Activated naive CD4-positive, alpha-beta T cell treated with anti-CD3 and anti-CD28 coated beads, Interleukin-2, amount 10 ng/mL, durations not matched to agents 7 days and 5 days (primary cell): ENCODE measurements at regions of chr1 and their contacts with region 1.

Region 1: DNA sequence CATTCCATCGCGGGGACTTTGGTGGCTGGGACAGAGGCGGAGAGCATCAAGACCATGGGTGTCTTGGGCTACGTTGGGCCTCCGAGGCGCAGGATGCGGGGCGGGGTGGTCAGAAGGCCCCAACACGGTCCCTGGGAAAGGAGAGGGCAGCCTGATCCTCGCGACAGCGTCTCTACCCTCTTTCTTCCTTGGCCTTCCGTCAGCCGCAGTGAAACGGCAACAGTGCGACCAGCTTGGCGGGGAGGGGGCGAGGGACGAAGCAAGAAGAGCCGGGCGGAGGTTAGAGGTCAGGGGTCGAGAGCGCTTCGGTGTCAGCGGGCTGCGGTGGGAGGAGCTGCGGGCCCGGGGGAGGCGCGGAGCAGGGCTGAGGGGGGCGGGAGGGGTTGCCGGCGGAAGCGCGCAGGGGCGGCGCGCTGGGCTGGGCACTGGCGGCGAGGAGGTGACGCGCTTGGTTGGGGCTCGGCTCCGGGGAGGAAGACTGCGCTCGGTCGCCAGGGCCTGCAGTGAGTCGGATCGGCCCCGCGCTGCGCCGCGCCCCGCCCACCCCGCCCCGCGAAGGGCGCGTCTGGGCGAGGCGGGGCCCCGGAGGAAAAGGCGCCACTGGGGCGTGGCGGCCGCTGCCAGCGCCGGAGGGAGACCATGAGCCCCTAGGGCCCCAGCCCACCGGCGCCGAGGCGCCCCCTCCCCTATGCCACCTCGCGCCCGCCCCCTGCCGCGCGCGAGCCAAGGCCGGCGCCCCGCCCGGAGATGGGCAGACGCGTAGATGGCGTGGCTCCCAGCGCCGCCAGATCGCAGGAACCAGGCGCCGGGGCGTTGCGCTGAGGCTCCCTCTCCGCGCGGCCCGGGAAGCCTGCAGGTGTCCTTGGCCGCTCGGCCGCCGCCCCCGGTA is at the start of gene KCNC4:
- DNase-seq: peak; percentile 95
- H3K4me3 Mint-ChIP-seq: peak within 1 kb of the TSS; percentile 86
- H3K27ac Mint-ChIP-seq: peak within 1 kb of the TSS; percentile 95
- H3K4me1 Mint-ChIP-seq: peaks cover 42% of the 10 kb centered on the region
- H3K27me3 Mint-ChIP-seq: peaks cover 31% of the 10 kb centered on the region

Region 2: GRCh38 chr1:109802901-109803561 is 406.9 kb before region 1 on chr1:
- CTCF ChIA-PET with region 1: no interaction called
- DNase-seq: no peak
- H3K4me3 Mint-ChIP-seq: peak overlapping the region; percentile 40
- H3K27ac Mint-ChIP-seq: peak overlapping the region; percentile 98
- H3K4me1 Mint-ChIP-seq: peaks cover 88% of the 10 kb centered on the region
- H3K27me3 Mint-ChIP-seq: no peaks in the 10 kb centered on the region

Region 3: DNA sequence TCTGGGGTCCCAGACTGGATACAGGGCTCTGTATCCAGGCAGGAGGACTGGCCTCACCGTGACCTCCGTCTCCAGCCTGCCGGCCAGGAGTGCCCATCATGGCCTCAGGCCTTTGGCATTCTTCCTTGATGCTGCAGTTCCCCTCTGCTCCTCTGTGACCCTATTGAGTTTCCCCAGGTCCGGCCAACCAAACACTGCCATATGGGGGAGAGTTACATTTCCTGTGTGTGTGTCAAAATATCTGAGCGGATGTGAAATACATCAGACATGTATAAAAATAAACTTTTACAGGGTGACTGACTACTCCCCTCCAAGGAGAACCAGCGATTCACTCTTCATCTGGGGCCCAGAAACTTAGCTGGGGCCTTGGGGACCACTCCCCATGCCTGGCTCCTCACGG is 107.9 kb before region 1 on chr1:
- CTCF ChIA-PET with region 1: no interaction called
- DNase-seq: no peak
- H3K4me3 Mint-ChIP-seq: no peak overlapping the region
- H3K27ac Mint-ChIP-seq: no peak overlapping the region
- H3K4me1 Mint-ChIP-seq: no peaks in the 10 kb centered on the region
- H3K27me3 Mint-ChIP-seq: peaks cover 46% of the 10 kb centered on the region

Region 4: GRCh38 chr1:110196917-110197765 is 12.8 kb before region 1 on chr1:
- CTCF ChIA-PET with region 1: interaction called, 19 read pairs
- DNase-seq: peak; percentile 66
- H3K4me3 Mint-ChIP-seq: no peak overlapping the region
- H3K27ac Mint-ChIP-seq: no peak overlapping the region
- H3K4me1 Mint-ChIP-seq: no peaks in the 10 kb centered on the region
- H3K27me3 Mint-ChIP-seq: no peaks in the 10 kb centered on the region

Region 5: DNA sequence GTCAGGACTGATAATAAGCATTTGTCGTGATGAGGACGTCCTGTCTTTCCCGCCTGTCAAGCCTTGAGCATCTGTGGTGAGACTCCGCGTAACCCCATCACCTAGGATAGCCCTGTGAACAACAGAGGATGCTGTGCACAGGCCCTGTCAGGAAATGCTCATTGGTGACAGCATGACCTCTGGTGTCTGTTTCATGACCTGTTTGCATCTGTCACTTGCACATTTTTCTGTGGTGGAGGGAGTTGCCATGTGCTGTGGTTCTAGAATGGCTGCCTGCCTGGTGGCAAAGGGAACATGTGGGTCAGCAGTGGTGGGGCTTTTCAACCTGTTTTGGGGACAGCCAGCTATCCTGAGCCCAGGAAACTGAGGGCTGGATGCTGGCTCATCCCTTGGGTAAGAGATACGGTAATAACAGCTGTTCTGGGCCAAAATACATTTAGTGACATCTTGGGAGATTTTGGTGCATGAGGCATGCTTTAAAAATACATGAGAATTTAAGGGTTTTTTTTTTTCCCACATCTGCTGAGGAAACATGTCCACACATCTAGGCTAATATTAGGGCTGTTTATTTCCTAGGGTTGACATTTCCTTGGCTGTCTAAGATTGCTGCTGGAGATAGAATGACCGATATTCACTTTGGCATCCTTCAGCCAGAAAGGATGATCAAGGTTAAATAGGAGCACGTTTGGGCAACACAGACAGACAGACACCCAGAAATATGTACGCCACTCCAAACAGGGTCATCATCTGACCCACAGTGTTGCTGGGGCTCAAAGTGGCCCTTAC is 53.1 kb after region 1 on chr1:
- CTCF ChIA-PET with region 1: interaction called, 26 read pairs
- DNase-seq: peak; percentile 30
- H3K4me3 Mint-ChIP-seq: no peak overlapping the region
- H3K27ac Mint-ChIP-seq: no peak overlapping the region
- H3K4me1 Mint-ChIP-seq: no peaks in the 10 kb centered on the region
- H3K27me3 Mint-ChIP-seq: peaks cover 23% of the 10 kb centered on the region

Region 6: GRCh38 chr1:110338886-110339406 is 129.0 kb after region 1 on chr1 and contains the start of gene RBM15:
- CTCF ChIA-PET with region 1: interaction called, 49 read pairs
- DNase-seq: peak; percentile 98
- H3K4me3 Mint-ChIP-seq: no peak within 1 kb of the TSS
- H3K27ac Mint-ChIP-seq: no peak within 1 kb of the TSS
- H3K4me1 Mint-ChIP-seq: peaks cover 60% of the 10 kb centered on the region
- H3K27me3 Mint-ChIP-seq: no peaks in the 10 kb centered on the region

Region 7: GRCh38 chr1:110412576-110412975 is 202.6 kb after region 1 on chr1:
- CTCF ChIA-PET with region 1: interaction called, 14 read pairs
- DNase-seq: peak; percentile 75
- H3K4me3 Mint-ChIP-seq: no peak overlapping the region
- H3K27ac Mint-ChIP-seq: no peak overlapping the region
- H3K4me1 Mint-ChIP-seq: peaks cover 17% of the 10 kb centered on the region
- H3K27me3 Mint-ChIP-seq: no peaks in the 10 kb centered on the region

Region 8: GRCh38 chr1:110460253-110461220 is 250.6 kb after region 1 on chr1:
- CTCF ChIA-PET with region 1: interaction called, 96 read pairs
- DNase-seq: peak; percentile 89
- H3K4me3 Mint-ChIP-seq: no peak overlapping the region
- H3K27ac Mint-ChIP-seq: no peak overlapping the region
- H3K4me1 Mint-ChIP-seq: no peaks in the 10 kb centered on the region
- H3K27me3 Mint-ChIP-seq: peaks cover 11% of the 10 kb centered on the region

Region 9: GRCh38 chr1:110645821-110646735 is 436.1 kb after region 1 on chr1:
- CTCF ChIA-PET with region 1: no interaction called
- DNase-seq: no peak
- H3K4me3 Mint-ChIP-seq: no peak overlapping the region
- H3K27ac Mint-ChIP-seq: peak overlapping the region; percentile 24
- H3K4me1 Mint-ChIP-seq: peaks cover 47% of the 10 kb centered on the region
- H3K27me3 Mint-ChIP-seq: no peaks in the 10 kb centered on the region